GM12878 (cell line): ENCODE measurements at regions of chr3 and their contacts with region 1.

Region 1: GRCh38 chr3:158727206-158728060 is 4.8 kb downstream of the RARRES1 start:
- DNase-seq: peak; percentile 26
- ATAC-seq: peak; percentile 75
- H3K4me3 ChIP-seq: no peak overlapping the region
- H3K27ac ChIP-seq: no peak overlapping the region
- H3K4me1 ChIP-seq: peaks cover 5% of the 10 kb centered on the region
- H3K27me3 ChIP-seq: no peaks in the 10 kb centered on the region
- CTCF ChIP-seq: peak; percentile 67 to 90 (median 81)
- EP300 ChIP-seq: no peak
- POLR2A ChIP-seq: no peak
- RAD21 ChIP-seq: peak; percentile 74

Region 2: DNA sequence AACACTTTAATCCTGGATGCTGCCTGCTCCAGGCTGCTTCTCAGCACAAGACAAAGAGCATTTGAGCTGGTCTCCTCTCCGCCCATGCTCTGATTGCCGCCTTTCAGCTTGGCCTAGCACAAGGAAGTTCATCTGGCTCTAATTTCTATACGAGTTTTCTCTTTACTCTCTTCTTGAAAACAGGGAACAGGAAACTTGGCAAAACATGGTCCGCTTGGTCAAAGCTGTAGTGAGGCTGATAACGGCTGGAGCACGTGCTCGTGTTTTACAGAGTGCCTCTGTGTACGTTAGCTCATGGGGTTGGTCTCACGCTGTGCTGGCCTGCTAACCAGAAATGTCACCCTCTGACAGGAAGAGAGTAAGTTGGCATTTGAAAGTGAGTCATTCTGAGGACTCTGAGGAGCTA is 14.3 kb before region 1 on chr3:
- CTCF ChIA-PET with region 1: interaction called, 16 read pairs
- POLR2A ChIA-PET with region 1: no interaction called
- RAD21 ChIA-PET with region 1: no interaction called
- SMC1A ChIA-PET with region 1: interaction called, 4 read pairs
- in situ Hi-C with region 1: no loop called
- intact Hi-C with region 1: no loop called
- DNase-seq: no peak
- ATAC-seq: no peak
- H3K4me3 ChIP-seq: no peak overlapping the region
- H3K27ac ChIP-seq: no peak overlapping the region
- H3K4me1 ChIP-seq: no peaks in the 10 kb centered on the region
- H3K27me3 ChIP-seq: no peaks in the 10 kb centered on the region
- CTCF ChIP-seq: no peak
- EP300 ChIP-seq: no peak
- POLR2A ChIP-seq: no peak
- RAD21 ChIP-seq: no peak

Region 3: GRCh38 chr3:158742871-158743663 is 15.6 kb after region 1 on chr3:
- CTCF ChIA-PET with region 1: interaction called, 23 read pairs
- POLR2A ChIA-PET with region 1: no interaction called
- RAD21 ChIA-PET with region 1: interaction called, 4 read pairs
- SMC1A ChIA-PET with region 1: interaction called, 9 read pairs
- in situ Hi-C with region 1: no loop called
- intact Hi-C with region 1: no loop called
- DNase-seq: no peak
- ATAC-seq: no peak
- H3K4me3 ChIP-seq: no peak overlapping the region
- H3K27ac ChIP-seq: no peak overlapping the region
- H3K4me1 ChIP-seq: peaks cover 5% of the 10 kb centered on the region; the same call in 1 of the 2 replicates
- H3K27me3 ChIP-seq: no peaks in the 10 kb centered on the region
- CTCF ChIP-seq: no peak
- EP300 ChIP-seq: no peak
- POLR2A ChIP-seq: no peak
- RAD21 ChIP-seq: no peak

Region 4: GRCh38 chr3:158782283-158782989 is 55.0 kb after region 1 on chr3:
- CTCF ChIA-PET with region 1: interaction called, 159 read pairs
- POLR2A ChIA-PET with region 1: no interaction called
- RAD21 ChIA-PET with region 1: interaction called, 3 read pairs
- SMC1A ChIA-PET with region 1: interaction called, 5 read pairs
- in situ Hi-C with region 1: no loop called
- intact Hi-C with region 1: no loop called
- DNase-seq: no peak
- ATAC-seq: no peak
- H3K4me3 ChIP-seq: no peak overlapping the region
- H3K27ac ChIP-seq: no peak overlapping the region
- H3K4me1 ChIP-seq: no peaks in the 10 kb centered on the region
- H3K27me3 ChIP-seq: no peaks in the 10 kb centered on the region
- CTCF ChIP-seq: no peak
- EP300 ChIP-seq: no peak
- POLR2A ChIP-seq: no peak
- RAD21 ChIP-seq: no peak

Region 5: GRCh38 chr3:158790901-158791589 is 63.6 kb after region 1 on chr3:
- CTCF ChIA-PET with region 1: interaction called, 159 read pairs
- POLR2A ChIA-PET with region 1: no interaction called
- RAD21 ChIA-PET with region 1: interaction called, 78 read pairs
- SMC1A ChIA-PET with region 1: interaction called, 59 read pairs
- in situ Hi-C with region 1: loop called (anchors 5 kb)
- intact Hi-C with region 1: loop called (anchors 1 kb)
- DNase-seq: no peak
- ATAC-seq: peak; percentile 87
- H3K4me3 ChIP-seq: no peak overlapping the region
- H3K27ac ChIP-seq: no peak overlapping the region
- H3K4me1 ChIP-seq: no peaks in the 10 kb centered on the region
- H3K27me3 ChIP-seq: no peaks in the 10 kb centered on the region; a peak in 1 of 4 replicates
- CTCF ChIP-seq: peak; percentile 79 to 88 (median 79)
- EP300 ChIP-seq: no peak
- POLR2A ChIP-seq: no peak
- RAD21 ChIP-seq: peak; percentile 92

Region 6: DNA sequence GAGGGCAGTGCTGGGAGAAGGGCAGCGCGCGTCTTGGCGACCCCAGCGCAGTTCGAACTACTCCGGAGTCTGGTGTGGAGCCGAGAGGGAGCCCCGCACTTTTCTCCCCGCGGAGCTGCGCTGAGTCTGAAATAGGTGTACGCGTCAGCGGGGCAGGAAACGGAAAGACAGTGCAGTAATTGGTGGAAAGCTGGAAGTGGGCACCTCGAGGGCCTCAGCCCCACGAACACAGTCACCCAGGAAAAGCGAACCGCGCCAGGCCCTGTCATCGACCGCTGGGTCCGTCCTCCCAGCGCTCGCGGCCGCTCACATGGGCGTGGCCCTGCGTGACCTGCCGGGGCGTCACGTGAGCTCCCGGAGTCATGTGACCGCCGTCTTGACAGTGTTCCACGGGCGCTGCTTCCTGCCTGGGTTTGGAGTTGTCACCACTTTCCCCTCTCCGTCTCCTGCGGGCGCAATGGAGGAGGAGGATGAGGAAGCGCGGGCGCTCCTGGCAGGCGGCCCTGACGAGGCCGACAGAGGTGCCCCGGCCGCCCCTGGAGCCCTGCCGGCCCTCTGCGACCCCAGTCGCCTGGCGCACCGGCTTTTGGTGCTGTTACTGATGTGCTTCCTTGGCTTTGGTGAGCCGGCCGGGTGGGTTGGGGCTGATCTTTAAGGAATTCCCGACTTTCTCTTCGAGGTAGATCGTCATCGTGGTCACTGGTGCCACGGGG is 74.4 kb after region 1 on chr3 and contains the start of gene MFSD1:
- CTCF ChIA-PET with region 1: interaction called, 36 read pairs
- POLR2A ChIA-PET with region 1: no interaction called
- RAD21 ChIA-PET with region 1: interaction called, 8 read pairs
- SMC1A ChIA-PET with region 1: interaction called, 6 read pairs
- in situ Hi-C with region 1: no loop called
- intact Hi-C with region 1: no loop called
- DNase-seq: peak; percentile 43
- ATAC-seq: peak; percentile 98
- H3K4me3 ChIP-seq: peak within 1 kb of the TSS; percentile 93
- H3K27ac ChIP-seq: peak within 1 kb of the TSS; percentile 61
- H3K4me1 ChIP-seq: peaks cover 3% of the 10 kb centered on the region
- H3K27me3 ChIP-seq: no peaks in the 10 kb centered on the region
- CTCF ChIP-seq: no peak
- EP300 ChIP-seq: no peak
- POLR2A ChIP-seq: peak; percentile 87
- RAD21 ChIP-seq: no peak
- polyA plus RNA-seq, gene MFSD1: 7.3 to 14.6 TPM

Region 7: GRCh38 chr3:158961911-158962310 is 234.5 kb after region 1 on chr3:
- CTCF ChIA-PET with region 1: no interaction called
- POLR2A ChIA-PET with region 1: no interaction called
- RAD21 ChIA-PET with region 1: no interaction called
- SMC1A ChIA-PET with region 1: no interaction called
- in situ Hi-C with region 1: no loop called
- intact Hi-C with region 1: no loop called
- DNase-seq: no peak
- ATAC-seq: no peak
- H3K4me3 ChIP-seq: no peak overlapping the region
- H3K27ac ChIP-seq: no peak overlapping the region
- H3K4me1 ChIP-seq: no peaks in the 10 kb centered on the region
- H3K27me3 ChIP-seq: no peaks in the 10 kb centered on the region
- CTCF ChIP-seq: no peak
- EP300 ChIP-seq: no peak
- POLR2A ChIP-seq: no peak
- RAD21 ChIP-seq: no peak